Psoas muscle (tissue), 8 donors: ENCODE measurements at regions of chr11 and their contacts with region 1.

Region 1: GRCh38 chr11:109946322-109946846 is 146.8 kb upstream of the ZC3H12C start:
- DNase-seq: peak; percentile 83 to 90
- ATAC-seq: peak; percentile 96 to 99 (median 98)
- H3K4me3 ChIP-seq: peak overlapping the region; percentile 54
- H3K27ac ChIP-seq: peak overlapping the region; percentile 18
- H3K4me1 ChIP-seq: peaks cover 11% of the 10 kb centered on the region
- H3K27me3 ChIP-seq: no peaks in the 10 kb centered on the region
- CTCF ChIP-seq: peak; percentile 96

Region 2: DNA sequence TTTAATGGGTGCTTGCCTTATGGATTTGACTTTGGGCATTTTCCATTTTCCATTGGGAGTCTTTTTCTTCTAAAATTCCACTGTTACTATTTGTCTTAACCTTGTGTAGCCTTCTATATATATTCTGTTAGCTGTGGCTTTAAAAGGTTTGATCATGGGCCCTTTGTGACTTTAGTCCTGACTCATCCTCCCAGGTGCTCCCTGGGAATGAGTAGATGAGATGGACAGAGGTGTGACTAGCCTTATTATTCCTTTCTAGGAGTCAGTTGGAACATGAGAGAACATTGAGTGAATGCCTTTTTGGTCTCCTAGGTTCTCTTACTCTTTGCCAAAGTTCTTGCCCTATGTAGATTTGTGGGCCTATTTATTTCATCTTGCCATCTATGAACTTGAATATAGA is 1242.5 kb before region 1 on chr11:
- intact Hi-C with region 1: loop called in 1 of 2 experiments (anchors 10 kb)
- DNase-seq: no peak
- ATAC-seq: no peak
- H3K4me3 ChIP-seq: no peak overlapping the region
- H3K27ac ChIP-seq: no peak overlapping the region
- H3K4me1 ChIP-seq: no peaks in the 10 kb centered on the region
- H3K27me3 ChIP-seq: no peaks in the 10 kb centered on the region
- CTCF ChIP-seq: no peak

Region 3: GRCh38 chr11:109993786-109994185 is 47.4 kb after region 1 on chr11:
- intact Hi-C with region 1: loop called in 1 of 2 experiments (anchors 1 kb)
- DNase-seq: no peak
- ATAC-seq: no peak
- H3K4me3 ChIP-seq: no peak overlapping the region
- H3K27ac ChIP-seq: no peak overlapping the region
- H3K4me1 ChIP-seq: peaks cover 4% of the 10 kb centered on the region
- H3K27me3 ChIP-seq: no peaks in the 10 kb centered on the region
- CTCF ChIP-seq: no peak

Region 4: DNA sequence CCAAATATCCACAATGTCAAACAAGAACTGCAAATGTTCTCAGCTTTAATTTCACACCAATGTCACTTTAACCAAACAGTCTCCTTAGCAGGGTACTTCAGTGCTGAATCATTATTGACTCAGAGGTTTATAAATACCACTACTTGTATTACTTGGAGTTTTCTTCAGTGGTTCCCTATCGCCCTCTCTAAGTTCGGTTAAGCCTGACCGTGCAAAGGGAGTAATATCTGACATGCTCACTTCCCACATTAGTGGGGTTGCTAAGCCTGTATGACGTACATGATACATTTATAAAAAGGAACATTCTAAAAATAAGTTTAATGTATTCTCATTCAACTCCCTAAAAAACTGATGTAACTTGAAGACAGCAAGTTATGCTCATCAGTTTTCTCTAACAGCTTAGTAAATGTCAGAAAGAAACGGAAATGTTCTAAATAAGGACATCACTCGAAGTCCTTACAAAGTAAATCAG is 53.7 kb after region 1 on chr11:
- intact Hi-C with region 1: loop called in 1 of 2 experiments (anchors 2 kb)
- DNase-seq: no peak
- ATAC-seq: peak; percentile 98 to 99 (median 98)
- H3K4me3 ChIP-seq: no peak overlapping the region
- H3K27ac ChIP-seq: peak overlapping the region; percentile 77
- H3K4me1 ChIP-seq: peaks cover 20% of the 10 kb centered on the region
- H3K27me3 ChIP-seq: no peaks in the 10 kb centered on the region
- CTCF ChIP-seq: no peak

Region 5: DNA sequence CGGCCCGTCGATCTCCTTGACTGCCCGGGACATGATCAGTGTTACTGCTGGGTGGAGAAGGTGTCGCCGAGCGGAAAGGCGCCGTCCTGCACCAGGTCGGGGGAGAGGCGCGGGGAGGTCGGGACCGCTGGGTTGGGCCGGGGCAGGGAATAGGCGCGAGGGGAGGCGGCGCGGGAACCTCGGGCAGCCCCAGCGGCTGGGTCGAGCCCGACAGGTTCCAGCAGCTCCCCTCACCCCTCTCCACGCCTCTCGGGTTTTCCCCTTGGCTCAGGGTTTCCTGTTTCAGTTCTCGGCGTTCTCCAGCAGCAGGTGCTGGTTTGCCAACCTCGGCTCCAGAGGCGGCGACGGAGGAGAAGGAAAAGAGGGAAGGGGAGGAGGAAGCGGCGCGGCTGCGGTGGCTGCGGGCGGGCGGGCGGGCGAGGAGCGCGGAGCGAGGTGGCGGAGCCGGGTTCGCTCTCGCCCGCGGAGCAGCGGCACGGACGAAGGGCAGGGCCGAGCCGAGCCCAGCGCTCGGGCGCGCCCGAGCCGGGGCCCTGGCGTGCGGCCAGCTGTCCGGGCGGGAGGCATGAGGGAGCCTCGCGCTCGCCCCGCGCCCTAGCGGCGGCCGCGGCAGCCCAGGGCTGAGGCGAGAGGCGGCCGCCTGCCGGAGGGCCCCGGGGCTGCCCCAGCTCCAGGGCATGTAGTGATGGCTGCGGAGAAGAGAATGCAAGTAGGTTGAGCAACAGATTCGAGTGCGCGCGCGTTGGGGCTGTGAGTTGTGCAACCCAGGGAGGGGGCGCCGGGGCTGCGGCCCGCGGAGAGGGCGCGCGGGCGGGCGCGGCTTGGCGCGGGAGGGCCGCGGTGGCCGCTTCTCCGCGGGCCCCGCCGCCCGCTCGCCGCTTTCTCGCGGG is 146.4 kb after region 1 on chr11 and contains the start of gene ZC3H12C:
- intact Hi-C with region 1: loop called (anchors 5 kb)
- DNase-seq: peak; percentile 89 to 92
- ATAC-seq: peak; percentile 87 to 90 (median 88)
- H3K4me3 ChIP-seq: peak within 1 kb of the TSS; percentile 82
- H3K27ac ChIP-seq: peak within 1 kb of the TSS; percentile 95
- H3K4me1 ChIP-seq: peaks cover 30% of the 10 kb centered on the region
- H3K27me3 ChIP-seq: no peaks in the 10 kb centered on the region
- CTCF ChIP-seq: peak; percentile 55
- total RNA-seq, gene ZC3H12C: 17.5 to 27.4 (median 20.7) TPM

Region 6: GRCh38 chr11:110173811-110174644 is 227.6 kb after region 1 on chr11:
- intact Hi-C with region 1: loop called in 1 of 2 experiments (anchors 10 kb)
- DNase-seq: peak; percentile 57 to 76
- ATAC-seq: peak; percentile 71 to 89 (median 80)
- H3K4me3 ChIP-seq: no peak overlapping the region
- H3K27ac ChIP-seq: no peak overlapping the region
- H3K4me1 ChIP-seq: peaks cover 6% of the 10 kb centered on the region
- H3K27me3 ChIP-seq: no peaks in the 10 kb centered on the region
- CTCF ChIP-seq: peak; percentile 63

Region 7: GRCh38 chr11:110366291-110366690 is 419.9 kb after region 1 on chr11:
- intact Hi-C with region 1: loop called (anchors 5 kb)
- DNase-seq: peak in 1 of 2 donors; percentile 53
- ATAC-seq: peak in 1 of 4 donors; percentile 38
- H3K4me3 ChIP-seq: no peak overlapping the region
- H3K27ac ChIP-seq: no peak overlapping the region
- H3K4me1 ChIP-seq: no peaks in the 10 kb centered on the region
- H3K27me3 ChIP-seq: no peaks in the 10 kb centered on the region
- CTCF ChIP-seq: no peak